PC-3 (cell line): ENCODE measurements at regions of chr5 and their contacts with region 1.

Region 1: DNA sequence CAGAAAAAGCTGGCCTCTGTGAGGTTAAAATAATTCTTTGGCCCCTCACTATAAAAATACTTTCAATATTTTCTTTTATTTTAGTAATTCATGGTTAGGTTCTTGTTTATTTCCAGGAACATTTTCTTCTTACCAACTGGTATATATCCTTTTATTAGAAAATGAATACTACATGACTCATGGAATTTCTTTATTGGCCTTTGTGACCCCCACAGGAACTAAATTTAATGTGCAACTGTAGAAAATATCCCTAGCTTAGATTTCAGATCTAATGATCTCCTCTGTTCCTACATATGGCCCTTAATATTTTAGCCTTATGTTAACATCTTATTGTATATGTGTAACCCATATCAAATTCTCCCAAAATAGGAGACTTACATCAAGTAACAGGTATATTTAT is 429.9 kb downstream of the NR2F1-AS1 start:
- DNase-seq: peak; percentile 85
- ATAC-seq: peak; percentile 75
- H3K4me3 ChIP-seq: 0 out of 2 replicates have a peak overlapping the region, but pooled peaks have one; percentile 37
- H3K27ac ChIP-seq: peak overlapping the region; percentile 70
- H3K4me1 ChIP-seq: peaks cover 30% of the 10 kb centered on the region
- H3K27me3 ChIP-seq: no peaks in the 10 kb centered on the region
- CTCF ChIP-seq: no peak

Region 2: DNA sequence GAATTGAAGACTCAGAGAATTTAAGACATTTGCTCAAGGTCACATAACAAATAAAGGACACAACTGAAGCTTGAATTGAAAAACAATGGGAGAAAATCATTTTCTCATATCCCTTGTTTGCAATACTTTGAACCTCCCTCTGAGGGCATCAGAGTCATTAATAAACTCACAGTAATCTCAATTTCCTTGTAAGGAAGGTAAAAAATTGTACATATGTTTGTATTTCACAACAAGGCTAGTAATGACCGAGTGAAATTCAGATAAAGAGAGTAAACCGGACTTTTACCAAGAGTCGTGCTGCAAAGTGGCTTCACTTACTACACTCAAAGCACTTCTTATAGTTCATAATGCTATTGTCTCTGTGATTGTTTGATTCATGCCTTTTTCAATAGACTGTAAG is 235.1 kb before region 1 on chr5:
- CTCF ChIA-PET with region 1: no interaction called
- POLR2A ChIA-PET with region 1: no interaction called
- intact Hi-C with region 1: loop called (anchors 10 kb)
- DNase-seq: peak; percentile 56
- ATAC-seq: no peak
- H3K4me3 ChIP-seq: no peak overlapping the region
- H3K27ac ChIP-seq: no peak overlapping the region
- H3K4me1 ChIP-seq: peaks cover 13% of the 10 kb centered on the region; the same call in 1 of the 2 replicates
- H3K27me3 ChIP-seq: no peaks in the 10 kb centered on the region
- CTCF ChIP-seq: peak; percentile 63; the same call in 1 of the 2 replicates

Region 3: DNA sequence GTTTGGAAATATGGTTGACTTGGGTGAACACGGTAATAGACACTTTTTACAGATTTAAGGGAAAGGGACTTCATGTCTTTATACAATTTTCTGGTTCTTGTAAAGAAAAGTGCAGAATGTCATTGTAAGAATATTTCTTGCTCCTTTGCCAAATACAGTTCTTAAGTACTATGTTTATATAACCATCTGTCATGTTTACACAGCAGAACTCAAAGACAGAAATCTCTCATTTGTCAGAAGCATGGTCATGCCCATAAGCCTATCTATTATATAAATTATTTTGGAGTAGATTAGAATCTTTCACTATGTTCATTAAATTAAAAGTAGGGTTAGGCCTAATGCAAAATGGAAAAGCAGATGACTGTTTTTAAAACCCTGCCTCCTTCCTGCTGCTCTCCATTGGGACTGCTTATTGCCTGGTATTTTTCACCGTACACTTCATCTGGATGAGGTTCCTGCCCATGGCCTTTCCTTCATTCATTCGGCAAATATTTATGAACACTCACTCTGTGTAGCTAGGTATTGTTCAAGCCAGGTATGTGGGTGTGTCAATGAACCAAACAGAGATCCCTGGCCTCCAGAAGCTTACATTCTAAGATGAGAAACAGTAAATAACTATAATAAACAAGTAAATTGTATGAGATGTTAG is 128.2 kb before region 1 on chr5:
- CTCF ChIA-PET with region 1: no interaction called
- POLR2A ChIA-PET with region 1: no interaction called
- intact Hi-C with region 1: no loop called
- DNase-seq: peak; percentile 46
- ATAC-seq: peak; percentile 81
- H3K4me3 ChIP-seq: no peak overlapping the region
- H3K27ac ChIP-seq: no peak overlapping the region
- H3K4me1 ChIP-seq: peaks cover 16% of the 10 kb centered on the region
- H3K27me3 ChIP-seq: no peaks in the 10 kb centered on the region
- CTCF ChIP-seq: no peak

Region 4: DNA sequence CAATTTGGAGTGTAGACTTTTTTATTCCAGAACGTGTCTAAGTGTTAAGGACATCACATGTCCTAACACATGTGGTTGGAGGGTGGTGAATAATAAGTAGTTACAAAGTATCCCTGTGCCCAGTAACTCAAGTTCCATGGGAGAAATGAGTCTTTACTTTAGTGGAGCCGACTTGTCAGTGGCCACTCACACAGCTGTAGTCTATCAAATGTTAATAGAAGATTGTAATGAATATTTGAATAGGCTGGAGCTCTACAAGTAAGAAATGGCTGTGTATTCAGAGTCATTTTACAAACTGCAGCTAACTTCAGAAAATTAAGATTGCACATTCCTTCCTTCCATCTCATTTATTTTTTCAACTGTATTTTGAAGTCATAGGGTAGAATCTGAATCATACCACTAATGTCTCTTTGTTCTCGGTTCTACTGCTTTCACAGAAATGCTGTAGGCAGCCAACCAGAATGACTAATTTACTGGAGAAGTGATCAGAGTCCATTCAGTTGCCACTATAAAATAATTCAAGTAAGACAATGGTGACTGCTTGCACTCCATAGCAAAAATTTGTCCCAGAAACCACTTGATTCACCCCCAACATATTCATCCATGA is 35.1 kb after region 1 on chr5:
- CTCF ChIA-PET with region 1: no interaction called
- POLR2A ChIA-PET with region 1: no interaction called
- intact Hi-C with region 1: no loop called
- DNase-seq: peak; percentile 66
- ATAC-seq: peak; percentile 29; the same call in 1 of the 2 replicates
- H3K4me3 ChIP-seq: no peak overlapping the region
- H3K27ac ChIP-seq: 0 out of 2 replicates have a peak overlapping the region, but pooled peaks have one; percentile 1
- H3K4me1 ChIP-seq: peaks cover 33% of the 10 kb centered on the region
- H3K27me3 ChIP-seq: no peaks in the 10 kb centered on the region
- CTCF ChIP-seq: no peak